Posterior cingulate gyrus (tissue), 11 donors: ENCODE measurements at regions of chr19 and their contacts with region 1.

Region 1: GRCh38 chr19:39546599-39546998 is 6.6 kb upstream of the EID2 start:
- DNase-seq: no peak

Region 2: GRCh38 chr19:39671738-39672363 is 125.3 kb after region 1 on chr19:
- intact Hi-C with region 1: loop called (anchors 1 kb)
- DNase-seq: peak in 2 of 10 donors; percentile 12 to 23